Activated naive CD4-positive, alpha-beta T cell treated with anti-CD3 and anti-CD28 coated beads for 36 hours (primary cell): ENCODE measurements at regions of chr16 and their contacts with region 1.

Region 1: DNA sequence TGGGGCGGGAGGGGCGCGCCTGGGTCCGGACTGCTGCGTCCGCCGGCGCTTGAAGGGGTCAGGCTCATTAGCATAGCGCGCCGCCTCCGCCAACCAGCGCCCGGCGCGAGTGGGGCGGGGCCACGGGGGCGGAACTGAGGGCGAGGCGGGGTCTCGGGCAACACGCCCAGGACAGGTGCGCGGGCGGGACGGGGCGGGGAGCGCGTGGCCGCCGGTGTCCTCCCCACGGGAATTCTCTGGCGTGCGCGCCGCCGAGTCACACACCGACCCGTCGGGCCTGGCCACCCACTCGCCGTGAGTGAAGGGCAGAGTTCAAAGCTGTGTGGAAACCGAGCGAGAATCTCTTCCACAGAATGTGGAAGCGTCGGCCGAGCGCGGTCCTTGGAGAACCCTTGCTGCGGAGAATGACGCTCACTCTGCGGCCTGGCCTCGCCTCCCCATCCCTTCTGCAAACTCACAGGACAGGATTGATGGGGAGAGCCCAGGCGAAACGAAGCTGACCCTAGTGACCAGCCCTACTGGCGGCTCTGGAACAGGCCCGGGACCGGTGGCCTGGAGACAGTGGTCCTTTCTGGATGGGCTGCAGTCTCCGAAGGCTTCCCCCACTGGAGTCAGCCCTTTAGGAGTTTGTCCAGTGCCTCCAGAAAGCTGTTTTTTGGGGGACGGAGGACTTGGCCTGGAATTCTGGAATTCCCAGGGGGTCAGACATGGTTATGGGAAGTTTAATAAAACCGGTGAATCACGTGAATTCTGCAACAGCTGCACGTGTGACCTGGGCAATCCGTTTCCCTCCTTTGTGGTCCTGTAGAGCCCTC is at the start of gene SNAI3:
- DNase-seq: peak; percentile 86
- H3K4me3 Mint-ChIP-seq: peak within 1 kb of the TSS; percentile 71
- H3K27ac Mint-ChIP-seq: no peak within 1 kb of the TSS
- H3K4me1 Mint-ChIP-seq: peaks cover 45% of the 10 kb centered on the region
- H3K27me3 Mint-ChIP-seq: no peaks in the 10 kb centered on the region
- total RNA-seq, gene SNAI3: 2.9 to 3.0 TPM

Region 2: DNA sequence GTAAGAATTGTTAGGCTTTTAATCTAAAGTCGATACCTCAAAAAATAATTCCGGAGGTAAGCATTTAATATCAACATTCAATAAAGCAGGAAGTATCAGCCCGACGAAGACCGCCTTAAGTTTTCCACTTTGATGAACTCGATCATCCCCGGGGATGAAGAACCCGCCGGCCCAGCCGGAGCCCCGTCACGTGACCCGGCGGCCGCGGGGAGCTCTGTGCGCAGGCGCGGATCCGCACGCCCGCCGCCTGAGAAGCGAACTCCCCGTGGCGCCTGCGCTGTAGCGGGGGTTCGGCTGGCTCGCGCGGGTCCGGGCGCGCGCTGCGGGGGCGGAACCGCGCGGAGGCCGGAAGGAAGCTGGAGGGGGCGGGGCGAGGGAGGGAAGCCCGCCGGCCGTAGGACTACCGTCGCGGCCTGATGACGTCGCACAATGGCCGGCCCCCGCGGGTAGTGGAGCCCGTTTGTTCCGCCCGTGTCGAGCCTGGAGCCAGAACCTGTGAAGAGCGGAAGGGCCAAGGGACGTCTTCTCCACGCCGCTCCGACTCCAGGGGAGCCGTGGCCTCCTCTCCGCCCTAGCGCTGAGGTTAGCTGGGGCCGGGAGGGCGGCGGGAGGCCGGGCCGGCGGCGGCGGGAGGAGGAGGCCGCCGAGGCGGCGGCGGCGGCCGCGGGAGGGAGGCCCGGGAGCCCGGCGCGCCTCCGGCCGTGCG is 116.5 kb before region 1 on chr16 and contains the start of gene ZC3H18:
- CTCF ChIA-PET with region 1: no interaction called
- intact Hi-C with region 1: loop called (anchors 5 kb)
- DNase-seq: peak; percentile 97
- H3K4me3 Mint-ChIP-seq: peak within 1 kb of the TSS; percentile 81
- H3K27ac Mint-ChIP-seq: peak within 1 kb of the TSS; percentile 84
- H3K4me1 Mint-ChIP-seq: peaks cover 41% of the 10 kb centered on the region
- H3K27me3 Mint-ChIP-seq: no peaks in the 10 kb centered on the region
- total RNA-seq, gene ZC3H18: 55.8 to 58.5 TPM

Region 3: GRCh38 chr16:88650749-88651275 is 35.8 kb before region 1 on chr16 and contains the start of gene CYBA:
- CTCF ChIA-PET with region 1: no interaction called
- intact Hi-C with region 1: loop called (anchors 1 kb)
- DNase-seq: peak; percentile 91
- H3K4me3 Mint-ChIP-seq: peak within 1 kb of the TSS; percentile 87
- H3K27ac Mint-ChIP-seq: peak within 1 kb of the TSS; percentile 95
- H3K4me1 Mint-ChIP-seq: peaks cover 18% of the 10 kb centered on the region
- H3K27me3 Mint-ChIP-seq: no peaks in the 10 kb centered on the region
- total RNA-seq, gene CYBA: 167 to 180 TPM

Region 4: DNA sequence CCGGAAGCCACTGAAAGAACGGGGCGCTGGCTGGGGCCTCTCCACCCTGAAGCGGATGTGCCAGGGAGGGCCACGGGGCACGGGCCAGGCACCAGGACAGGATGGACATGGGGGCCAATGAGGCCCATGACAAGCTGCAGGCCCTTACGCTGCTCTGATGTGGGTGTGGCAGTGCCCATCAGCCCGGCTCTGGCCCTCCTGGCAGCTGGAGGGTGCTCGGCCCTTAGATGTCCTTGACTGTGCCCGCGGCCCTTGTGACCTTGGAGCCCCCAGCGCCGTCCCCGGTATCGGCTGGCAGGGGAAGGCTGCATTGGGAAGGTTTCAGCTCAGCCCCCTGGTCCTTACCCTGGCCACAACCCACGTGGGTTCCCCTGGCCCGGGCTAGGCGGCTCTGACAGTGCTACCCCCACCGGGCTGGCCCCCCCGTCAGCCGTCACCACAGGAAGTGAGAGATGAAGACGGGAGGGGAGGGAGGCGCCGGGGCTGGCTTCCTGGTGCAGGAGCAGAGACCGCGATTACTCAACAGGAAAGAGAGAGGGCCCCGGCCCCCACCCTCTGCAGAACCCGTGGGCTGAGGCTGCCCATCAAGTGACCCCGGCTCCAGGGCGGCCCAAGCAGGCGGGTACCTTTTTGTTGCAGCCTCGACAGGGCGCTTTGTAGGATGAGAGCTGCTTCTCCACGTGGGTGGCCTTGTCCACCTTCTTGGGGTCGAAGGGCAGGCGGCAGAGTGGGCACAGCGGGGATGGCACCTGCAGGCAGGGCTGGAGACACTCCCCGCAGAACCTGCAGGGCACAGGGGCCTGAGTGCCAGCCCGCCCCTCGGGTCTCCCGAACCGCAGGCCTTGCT is 14.2 kb after region 1 on chr16:
- CTCF ChIA-PET with region 1: interaction called, 10 read pairs
- intact Hi-C with region 1: loop called (anchors 1 kb)
- DNase-seq: peak; percentile 98
- H3K4me3 Mint-ChIP-seq: peak overlapping the region; percentile 84
- H3K27ac Mint-ChIP-seq: peak overlapping the region; percentile 98
- H3K4me1 Mint-ChIP-seq: peaks cover 71% of the 10 kb centered on the region
- H3K27me3 Mint-ChIP-seq: no peaks in the 10 kb centered on the region

Region 5: DNA sequence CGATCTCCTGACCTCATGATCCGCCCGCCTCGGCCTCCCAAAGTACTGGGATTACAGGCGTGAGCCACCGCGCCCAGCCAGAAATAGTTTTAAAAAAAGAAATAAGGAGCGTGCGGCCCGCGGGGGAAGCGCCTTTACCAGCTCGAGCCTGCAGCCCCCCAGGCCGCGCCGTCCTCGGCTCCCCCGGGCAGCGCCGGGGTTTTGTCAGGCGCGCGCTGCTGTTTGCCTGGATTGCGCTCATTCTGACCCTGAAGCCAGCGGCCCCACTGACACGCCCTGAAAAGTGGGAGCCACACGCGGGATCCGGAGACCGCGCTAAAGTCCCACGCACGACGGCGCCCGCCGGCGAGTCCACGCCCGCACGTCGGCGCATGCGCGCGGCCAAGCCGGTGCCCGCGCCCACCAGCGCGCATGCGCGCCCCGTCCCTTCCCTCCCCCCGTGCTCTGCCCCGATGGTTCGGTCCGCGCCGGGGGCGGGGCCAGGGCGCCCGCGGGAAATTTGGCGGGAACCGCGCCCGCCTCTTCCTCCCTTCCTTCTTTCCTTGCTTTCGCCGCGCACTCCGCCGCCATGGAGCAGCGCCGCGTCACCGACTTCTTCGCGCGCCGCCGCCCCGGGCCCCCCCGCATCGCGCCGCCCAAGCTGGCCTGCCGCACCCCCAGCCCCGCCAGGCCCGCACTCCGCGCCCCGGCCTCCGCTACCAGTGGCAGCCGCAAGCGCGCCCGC is 116.8 kb after region 1 on chr16 and contains the start of gene CDT1:
- CTCF ChIA-PET with region 1: no interaction called
- intact Hi-C with region 1: loop called (anchors 5 kb)
- DNase-seq: peak; percentile 82
- H3K4me3 Mint-ChIP-seq: peak within 1 kb of the TSS; percentile 79
- H3K27ac Mint-ChIP-seq: peak within 1 kb of the TSS; percentile 91
- H3K4me1 Mint-ChIP-seq: peaks cover 33% of the 10 kb centered on the region
- H3K27me3 Mint-ChIP-seq: no peaks in the 10 kb centered on the region
- total RNA-seq, gene CDT1: 223 to 231 TPM